GM12878 (cell line): ENCODE measurements at regions of chr1 and their contacts with region 1.

Region 1: GRCh38 chr1:160291248-160292220 is 6.6 kb upstream of the PEX19 start:
- DNase-seq: peak; percentile 45
- ATAC-seq: peak; percentile 99
- H3K4me3 ChIP-seq: no peak overlapping the region
- H3K27ac ChIP-seq: no peak overlapping the region
- H3K4me1 ChIP-seq: no peaks in the 10 kb centered on the region
- H3K27me3 ChIP-seq: no peaks in the 10 kb centered on the region
- CTCF ChIP-seq: peak; percentile 74 to 84 (median 80)
- EP300 ChIP-seq: no peak
- POLR2A ChIP-seq: no peak
- RAD21 ChIP-seq: peak; percentile 67

Region 2: DNA sequence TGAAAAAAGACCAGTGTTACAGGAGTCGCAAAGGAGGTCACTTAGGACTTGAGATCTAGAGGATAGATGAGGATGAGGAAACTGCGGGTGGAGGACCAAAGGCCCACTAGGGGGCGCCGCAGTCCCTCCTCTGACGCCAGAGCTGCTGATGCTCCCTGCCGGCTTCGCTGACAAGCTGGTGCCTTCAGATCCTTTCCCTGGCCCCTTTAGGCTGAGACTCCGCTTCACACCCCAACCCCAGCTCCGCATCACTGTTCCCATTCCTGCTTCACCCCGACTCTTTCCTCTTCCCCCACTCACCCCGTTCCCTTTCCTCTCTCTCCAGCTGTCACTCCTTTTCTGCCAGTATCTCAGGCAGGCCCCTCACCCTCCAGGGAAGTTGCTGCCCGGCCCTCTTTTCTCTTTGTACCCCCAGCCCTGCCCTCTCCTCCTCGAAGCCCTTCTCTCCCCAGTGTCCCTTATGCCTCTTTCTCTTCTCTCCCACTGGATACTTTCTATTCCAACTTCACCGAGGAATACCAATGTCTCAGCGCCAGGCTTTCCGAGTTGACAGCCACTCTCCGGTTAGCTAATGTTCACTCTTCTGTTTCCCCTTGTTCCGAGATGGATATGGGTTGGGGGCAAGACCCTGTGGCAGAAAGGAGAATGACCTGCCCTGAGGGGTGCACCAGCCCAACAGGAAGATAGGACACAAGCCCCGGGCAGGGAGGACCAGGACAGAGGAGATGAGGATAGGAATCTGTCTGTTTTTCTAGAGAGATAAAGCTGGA is 205.7 kb before region 1 on chr1:
- CTCF ChIA-PET with region 1: interaction called, 25 read pairs
- POLR2A ChIA-PET with region 1: no interaction called
- RAD21 ChIA-PET with region 1: interaction called, 5 read pairs
- SMC1A ChIA-PET with region 1: interaction called, 4 read pairs
- in situ Hi-C with region 1: no loop called
- intact Hi-C with region 1: no loop called
- DNase-seq: no peak
- ATAC-seq: peak; percentile 87
- H3K4me3 ChIP-seq: no peak overlapping the region
- H3K27ac ChIP-seq: no peak overlapping the region
- H3K4me1 ChIP-seq: no peaks in the 10 kb centered on the region
- H3K27me3 ChIP-seq: peaks cover 0 to 2% of the 10 kb centered on the region in 2 experiments; a peak in 3 of 4 replicates
- CTCF ChIP-seq: peak; percentile 82 to 89 (median 88)
- EP300 ChIP-seq: no peak
- POLR2A ChIP-seq: no peak
- RAD21 ChIP-seq: peak; percentile 59

Region 3: DNA sequence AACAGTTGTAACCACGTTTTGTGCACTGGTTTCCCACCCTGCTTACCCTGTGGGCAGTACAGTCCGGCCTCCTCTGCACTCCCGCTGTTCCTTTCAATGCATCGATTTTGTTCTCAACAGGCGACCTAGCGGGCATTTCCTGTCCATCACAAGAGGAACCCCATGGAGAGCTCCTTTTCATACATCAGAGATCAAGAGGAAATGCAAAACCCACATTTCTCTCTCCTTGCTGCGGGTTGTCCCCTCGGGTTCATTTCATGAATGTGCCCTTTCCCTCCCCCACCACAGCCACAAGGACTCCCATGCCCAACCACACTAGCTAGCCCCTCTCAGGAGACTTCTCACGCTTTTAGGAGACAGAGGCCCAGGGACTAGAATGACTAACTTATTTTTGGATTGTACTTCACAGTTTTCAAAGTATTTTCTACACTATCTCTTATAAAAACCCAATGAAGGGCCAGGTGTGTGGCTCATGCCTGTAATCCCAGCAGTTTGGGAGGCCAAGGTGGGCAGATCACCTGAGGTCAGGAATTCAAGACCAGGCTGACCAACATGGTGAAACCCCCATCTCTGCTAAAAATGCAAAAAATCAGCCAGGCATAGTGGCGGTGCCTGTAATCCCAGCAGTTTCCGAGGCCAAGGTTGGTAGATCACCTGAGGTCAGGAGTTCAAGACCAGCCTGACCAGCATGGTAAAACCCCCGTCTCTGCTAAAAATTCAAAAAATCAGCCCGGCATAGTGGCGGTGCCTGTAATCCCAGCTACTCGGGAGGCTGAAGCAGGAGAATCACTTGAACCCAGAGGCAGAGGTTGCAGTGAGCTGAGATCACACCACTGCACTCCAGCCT is 121.8 kb before region 1 on chr1:
- CTCF ChIA-PET with region 1: interaction called, 6 read pairs
- POLR2A ChIA-PET with region 1: no interaction called
- RAD21 ChIA-PET with region 1: interaction called, 14 read pairs
- SMC1A ChIA-PET with region 1: no interaction called
- in situ Hi-C with region 1: no loop called
- intact Hi-C with region 1: no loop called
- DNase-seq: peak; percentile 71
- ATAC-seq: peak; percentile 86
- H3K4me3 ChIP-seq: no peak overlapping the region
- H3K27ac ChIP-seq: no peak overlapping the region
- H3K4me1 ChIP-seq: peaks cover 21% of the 10 kb centered on the region
- H3K27me3 ChIP-seq: no peaks in the 10 kb centered on the region; a peak in 2 of 4 replicates
- CTCF ChIP-seq: no peak
- EP300 ChIP-seq: peak in 1 of 2 experiments; percentile 57; a peak in 2 of 4 replicates
- POLR2A ChIP-seq: no peak
- RAD21 ChIP-seq: no peak

Region 4: DNA sequence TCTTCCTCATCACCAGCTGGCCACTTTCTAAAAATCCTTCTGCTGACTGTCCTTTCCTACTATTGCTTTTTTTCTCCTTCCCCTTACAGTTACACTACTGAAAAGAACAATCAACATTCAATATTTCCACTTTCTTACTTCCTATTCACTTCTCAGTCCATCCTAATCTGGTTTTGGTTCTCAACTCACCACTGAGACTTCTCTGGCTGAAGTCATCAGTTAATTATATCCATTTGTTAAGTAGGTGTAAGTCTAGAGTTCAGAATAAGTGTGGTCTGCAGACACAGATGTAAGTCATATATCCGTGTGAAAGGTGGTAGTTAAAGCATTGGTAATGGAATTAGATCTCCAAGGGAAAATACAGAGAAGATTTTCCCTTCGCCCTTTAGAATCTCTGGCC is 64.9 kb before region 1 on chr1:
- CTCF ChIA-PET with region 1: interaction called, 29 read pairs
- POLR2A ChIA-PET with region 1: no interaction called
- RAD21 ChIA-PET with region 1: no interaction called
- SMC1A ChIA-PET with region 1: interaction called, 5 read pairs
- in situ Hi-C with region 1: no loop called
- intact Hi-C with region 1: no loop called
- DNase-seq: no peak
- ATAC-seq: peak; percentile 47
- H3K4me3 ChIP-seq: no peak overlapping the region
- H3K27ac ChIP-seq: no peak overlapping the region
- H3K4me1 ChIP-seq: no peaks in the 10 kb centered on the region; the same call in 1 of the 2 replicates
- H3K27me3 ChIP-seq: no peaks in the 10 kb centered on the region
- CTCF ChIP-seq: no peak
- EP300 ChIP-seq: no peak
- POLR2A ChIP-seq: no peak
- RAD21 ChIP-seq: no peak

Region 5: GRCh38 chr1:160261893-160262794 is 29.4 kb before region 1 on chr1 and contains the start of gene DCAF8:
- CTCF ChIA-PET with region 1: interaction called, 36 read pairs
- POLR2A ChIA-PET with region 1: interaction called, 6 read pairs
- RAD21 ChIA-PET with region 1: interaction called, 23 read pairs
- SMC1A ChIA-PET with region 1: interaction called, 98 read pairs
- in situ Hi-C with region 1: no loop called
- intact Hi-C with region 1: no loop called
- DNase-seq: peak; percentile 94
- ATAC-seq: peak; percentile 89
- H3K4me3 ChIP-seq: peak within 1 kb of the TSS; percentile 82
- H3K27ac ChIP-seq: peak within 1 kb of the TSS; percentile 90
- H3K4me1 ChIP-seq: peaks cover 3% of the 10 kb centered on the region
- H3K27me3 ChIP-seq: no peaks in the 10 kb centered on the region
- CTCF ChIP-seq: no peak
- EP300 ChIP-seq: no peak
- POLR2A ChIP-seq: peak; percentile 98
- RAD21 ChIP-seq: no peak
- polyA plus RNA-seq, gene DCAF8: 10.4 to 18.7 TPM

Region 6: DNA sequence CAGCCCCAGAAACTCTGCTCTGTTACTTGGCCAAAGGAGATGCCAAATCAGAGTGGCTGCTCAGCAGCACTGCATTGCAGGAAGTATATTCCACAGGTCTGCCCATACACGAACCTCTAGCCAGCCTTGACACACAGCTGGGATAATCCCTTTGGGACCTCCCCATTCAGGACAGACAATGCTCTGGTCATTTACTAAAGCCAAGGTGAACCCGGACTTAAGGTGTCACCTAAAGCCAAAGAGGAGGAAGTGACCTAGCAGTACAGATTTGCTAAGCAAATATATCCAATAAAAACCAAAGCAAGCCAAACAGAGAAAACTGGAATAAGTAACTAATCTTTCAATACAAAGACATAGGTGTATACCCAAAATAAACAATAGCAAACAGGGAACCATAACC is 23.8 kb after region 1 on chr1:
- CTCF ChIA-PET with region 1: interaction called, 19 read pairs
- POLR2A ChIA-PET with region 1: no interaction called
- RAD21 ChIA-PET with region 1: interaction called, 4 read pairs
- SMC1A ChIA-PET with region 1: interaction called, 5 read pairs
- in situ Hi-C with region 1: no loop called
- intact Hi-C with region 1: no loop called
- DNase-seq: no peak
- ATAC-seq: no peak
- H3K4me3 ChIP-seq: no peak overlapping the region
- H3K27ac ChIP-seq: no peak overlapping the region
- H3K4me1 ChIP-seq: no peaks in the 10 kb centered on the region
- H3K27me3 ChIP-seq: no peaks in the 10 kb centered on the region
- CTCF ChIP-seq: no peak
- EP300 ChIP-seq: no peak
- POLR2A ChIP-seq: no peak
- RAD21 ChIP-seq: no peak